ENCODE measurements at regions of chr2 and their contacts with region 1.

Region 1: GRCh38 chr2:227415538-227416424 is 28.0 kb upstream of the SCYGR1 start:
- DNase-seq: no peak
- ATAC-seq: peak; percentile 45
- H3K4me3 ChIP-seq: no peak overlapping the region
- H3K27ac ChIP-seq: no peak overlapping the region; the same call in 1 of the 2 replicates
- H3K4me1 ChIP-seq: peaks cover 31% of the 10 kb centered on the region
- H3K27me3 ChIP-seq: no peaks in the 10 kb centered on the region
- CTCF ChIP-seq: no peak
- EP300 ChIP-seq: no peak
- POLR2A ChIP-seq: no peak
- RAD21 ChIP-seq: no peak

Region 2: GRCh38 chr2:227388537-227389011 is 27.2 kb before region 1 on chr2:
- CTCF ChIA-PET with region 1: interaction called, 12 read pairs
- POLR2A ChIA-PET with region 1: no interaction called
- RAD21 ChIA-PET with region 1: interaction called, 10 read pairs
- SMC1A ChIA-PET with region 1: no interaction called
- in situ Hi-C with region 1: no loop called
- intact Hi-C with region 1: no loop called
- DNase-seq: no peak
- ATAC-seq: no peak
- H3K4me3 ChIP-seq: no peak overlapping the region
- H3K27ac ChIP-seq: no peak overlapping the region
- H3K4me1 ChIP-seq: no peaks in the 10 kb centered on the region
- H3K27me3 ChIP-seq: no peaks in the 10 kb centered on the region
- CTCF ChIP-seq: no peak
- EP300 ChIP-seq: no peak
- POLR2A ChIP-seq: no peak
- RAD21 ChIP-seq: no peak

Region 3: DNA sequence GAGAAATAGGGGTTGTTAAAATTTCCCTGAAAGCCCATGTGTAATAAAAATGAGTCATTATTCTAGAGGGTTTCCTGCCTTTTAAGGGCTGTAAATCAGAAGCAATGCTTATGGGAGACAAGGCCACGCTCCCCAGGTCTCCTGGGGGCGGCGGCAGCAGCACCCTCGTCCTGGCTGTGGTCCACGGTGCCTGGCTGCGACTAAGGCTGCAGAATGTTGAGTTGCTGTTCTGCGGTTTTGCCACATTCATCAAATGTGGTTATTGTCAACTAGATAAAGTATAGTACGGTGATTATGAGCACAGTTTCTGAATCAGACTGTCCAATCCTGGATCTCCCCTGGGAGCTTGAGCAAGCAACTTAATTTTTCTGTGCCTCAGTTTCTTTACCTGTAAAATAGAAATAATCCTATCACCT is 44.3 kb after region 1 on chr2:
- CTCF ChIA-PET with region 1: interaction called, 9 read pairs
- POLR2A ChIA-PET with region 1: interaction called, 11 read pairs
- RAD21 ChIA-PET with region 1: interaction called, 16 read pairs
- SMC1A ChIA-PET with region 1: interaction called, 191 read pairs
- in situ Hi-C with region 1: no loop called
- intact Hi-C with region 1: loop called (anchors 1 kb)
- DNase-seq: no peak
- ATAC-seq: peak; percentile 67
- H3K4me3 ChIP-seq: no peak overlapping the region
- H3K27ac ChIP-seq: peak overlapping the region; percentile 54
- H3K4me1 ChIP-seq: peaks cover 55% of the 10 kb centered on the region
- H3K27me3 ChIP-seq: no peaks in the 10 kb centered on the region
- CTCF ChIP-seq: no peak
- EP300 ChIP-seq: peak; percentile 59 to 65; a peak in 2 of 4 replicates
- POLR2A ChIP-seq: no peak
- RAD21 ChIP-seq: no peak